A673 (cell line): ENCODE measurements at regions of chr1 and their contacts with region 1.

Region 1: DNA sequence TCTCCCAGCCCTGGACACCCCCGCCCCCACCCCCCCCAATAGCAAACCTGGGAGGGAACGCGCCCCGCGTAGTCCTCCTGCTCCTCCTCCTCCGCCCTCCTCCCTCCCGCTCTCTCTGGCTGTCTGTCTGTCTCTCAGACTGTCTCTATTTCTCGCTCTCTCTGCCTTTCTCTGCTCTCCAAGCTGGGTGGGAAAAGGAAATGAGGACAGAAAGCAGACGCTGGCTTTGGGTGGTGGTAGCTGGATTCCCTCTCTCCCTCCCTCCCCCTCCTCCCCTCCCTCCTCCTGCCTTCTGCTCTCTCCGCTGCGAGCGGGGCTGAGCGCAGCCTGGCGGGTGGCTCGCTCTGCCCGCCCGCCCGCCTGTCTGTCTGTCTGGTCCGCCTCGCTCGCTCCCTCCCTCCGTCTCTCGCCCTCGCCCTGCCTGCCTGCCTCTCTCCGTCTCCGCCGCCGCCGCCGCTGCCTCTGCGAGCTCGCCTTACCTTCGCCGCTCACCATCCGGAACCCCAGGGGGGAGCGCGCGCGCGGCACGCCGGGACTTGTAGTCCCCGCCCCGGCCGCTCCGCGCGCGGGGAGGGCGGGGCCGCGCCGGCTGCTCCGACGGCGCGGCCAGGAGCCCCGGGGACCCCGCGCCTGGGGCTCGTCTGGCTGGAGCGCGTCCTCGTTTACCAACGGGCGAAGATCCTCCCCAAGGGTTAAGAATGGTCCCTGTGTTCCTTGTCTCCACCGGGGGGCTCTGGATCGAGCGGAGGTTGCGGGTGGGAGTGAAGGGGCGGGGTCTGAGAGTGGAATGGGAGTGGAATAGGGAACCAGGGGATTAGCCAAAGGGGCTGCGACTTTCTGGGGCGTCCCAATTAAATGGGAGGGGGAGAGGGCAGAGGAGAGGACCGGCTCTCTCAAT is at the start of gene AHDC1:
- DNase-seq: peak; percentile 96
- H3K4me3 ChIP-seq: peak within 1 kb of the TSS; percentile 87
- H3K27ac ChIP-seq: peak within 1 kb of the TSS; percentile 87
- H3K4me1 ChIP-seq: peaks cover 50% of the 10 kb centered on the region
- H3K27me3 ChIP-seq: no peaks in the 10 kb centered on the region
- CTCF ChIP-seq: no peak
- total RNA-seq, gene AHDC1: 33.2 and 34.2 TPM in 2 replicates

Region 2: GRCh38 chr1:27357281-27358037 is 246.5 kb before region 1 on chr1:
- CTCF ChIA-PET with region 1: no interaction called
- POLR2A ChIA-PET with region 1: no interaction called
- intact Hi-C with region 1: loop called (anchors 1 kb)
- DNase-seq: peak; percentile 73
- H3K4me3 ChIP-seq: no peak overlapping the region
- H3K27ac ChIP-seq: peak overlapping the region; percentile 19
- H3K4me1 ChIP-seq: no peaks in the 10 kb centered on the region
- H3K27me3 ChIP-seq: no peaks in the 10 kb centered on the region
- CTCF ChIP-seq: peak; percentile 96

Region 3: GRCh38 chr1:27416387-27417111 is 187.4 kb before region 1 on chr1:
- CTCF ChIA-PET with region 1: interaction called, 7 read pairs
- POLR2A ChIA-PET with region 1: no interaction called
- intact Hi-C with region 1: loop called (anchors 1 kb)
- DNase-seq: peak; percentile 71
- H3K4me3 ChIP-seq: no peak overlapping the region
- H3K27ac ChIP-seq: no peak overlapping the region
- H3K4me1 ChIP-seq: no peaks in the 10 kb centered on the region
- H3K27me3 ChIP-seq: no peaks in the 10 kb centered on the region
- CTCF ChIP-seq: peak; percentile 73

Region 4: GRCh38 chr1:27556781-27557595 is 46.9 kb before region 1 on chr1:
- CTCF ChIA-PET with region 1: interaction called, 37 read pairs
- POLR2A ChIA-PET with region 1: no interaction called
- intact Hi-C with region 1: loop called (anchors 1 kb)
- DNase-seq: peak; percentile 97
- H3K4me3 ChIP-seq: peak overlapping the region; percentile 26
- H3K27ac ChIP-seq: peak overlapping the region; percentile 11
- H3K4me1 ChIP-seq: peaks cover 54% of the 10 kb centered on the region
- H3K27me3 ChIP-seq: no peaks in the 10 kb centered on the region
- CTCF ChIP-seq: peak; percentile 93

Region 5: DNA sequence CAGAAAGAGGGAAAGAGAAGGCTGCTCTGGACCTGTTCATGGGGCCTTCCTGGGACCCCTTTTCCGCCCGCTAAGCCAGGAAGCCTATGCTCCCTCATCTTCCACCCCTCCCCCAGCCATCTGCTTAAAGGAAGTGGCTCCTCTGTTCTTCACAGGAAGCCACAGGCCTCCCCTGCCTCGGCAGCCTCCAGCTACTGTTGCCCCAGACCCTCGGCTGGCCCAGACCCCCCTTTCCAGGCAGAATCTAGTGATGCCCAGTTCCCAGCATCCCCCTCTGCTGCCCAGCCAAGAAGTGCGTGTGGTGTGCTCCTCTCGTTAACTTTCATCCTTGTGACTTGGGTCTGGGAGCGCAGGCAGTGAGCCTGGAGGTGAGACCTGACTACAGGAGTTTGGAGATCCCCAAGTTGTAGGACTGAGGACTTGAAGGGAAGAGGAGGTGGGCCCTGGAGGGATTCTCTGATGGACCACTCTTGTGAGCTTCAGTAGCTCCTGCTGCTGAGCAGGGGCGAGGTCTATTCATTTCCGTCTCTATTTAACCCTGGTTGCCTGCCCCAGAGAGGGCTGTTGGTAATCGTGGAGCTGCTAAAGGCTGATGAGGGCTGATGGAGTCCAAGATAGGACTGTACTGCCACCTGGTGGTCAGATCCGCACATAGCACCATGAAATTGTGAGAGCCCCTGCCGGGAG is 58.9 kb after region 1 on chr1:
- CTCF ChIA-PET with region 1: interaction called, 40 read pairs
- POLR2A ChIA-PET with region 1: no interaction called
- intact Hi-C with region 1: loop called (anchors 1 kb)
- DNase-seq: peak; percentile 89
- H3K4me3 ChIP-seq: no peak overlapping the region
- H3K27ac ChIP-seq: peak overlapping the region; percentile 4
- H3K4me1 ChIP-seq: peaks cover 3% of the 10 kb centered on the region
- H3K27me3 ChIP-seq: no peaks in the 10 kb centered on the region
- CTCF ChIP-seq: peak; percentile 88